A549 (cell line): ENCODE measurements at regions of chr1 and their contacts with region 1.

Region 1: DNA sequence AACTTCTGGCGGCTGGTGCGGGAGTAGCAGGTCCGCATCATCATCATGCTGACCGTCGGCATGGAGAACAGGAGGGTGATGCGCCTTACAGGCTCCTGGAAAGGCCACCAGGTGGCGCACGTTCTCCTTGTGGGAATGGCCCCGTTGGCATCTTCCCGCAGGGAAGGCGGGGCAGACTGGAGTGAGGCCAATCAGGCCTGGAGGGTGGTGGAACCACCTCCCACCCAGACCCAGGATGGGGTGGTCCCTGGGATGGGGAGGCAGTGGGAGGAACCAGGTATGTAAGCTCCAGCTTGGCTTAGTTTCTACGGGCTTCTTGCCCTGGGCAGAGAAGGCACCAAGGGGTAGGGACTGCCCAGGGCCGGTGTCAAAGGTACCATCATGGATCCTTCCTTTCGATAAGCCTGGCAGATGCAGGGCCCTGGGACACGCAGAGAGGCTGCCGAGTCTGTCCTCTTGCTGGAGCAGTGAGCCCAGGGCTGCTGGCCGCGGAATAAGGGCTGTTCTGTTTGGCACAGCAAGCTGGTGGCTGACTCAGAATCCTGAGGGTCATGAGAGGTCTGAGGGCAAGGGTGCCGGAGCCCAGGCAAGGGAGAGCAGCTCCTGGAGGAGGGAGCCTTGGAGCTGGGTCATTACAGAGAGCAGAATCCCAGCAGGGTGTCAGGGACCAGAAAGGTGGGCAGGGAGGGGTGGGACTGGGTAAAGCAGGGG is 8.7 kb upstream of the LGR6 start:
- DNase-seq: peak; percentile 91 to 92
- ATAC-seq: peak; percentile 74 to 91
- H3K4me3 ChIP-seq: no peak overlapping the region
- H3K27ac ChIP-seq: peak overlapping the region in 1 of 2 experiments; percentile 42; a peak in 1 of 6 replicates
- H3K4me1 ChIP-seq: peaks cover 11% of the 10 kb centered on the region
- CTCF ChIP-seq: peak; percentile 91
- EP300 ChIP-seq: no peak
- POLR2A ChIP-seq: no peak
- RAD21 ChIP-seq: peak; percentile 78 to 84

Region 2: GRCh38 chr1:202200112-202200566 is 15.2 kb after region 1 on chr1:
- CTCF ChIA-PET with region 1: interaction called, 39 read pairs
- POLR2A ChIA-PET with region 1: no interaction called
- DNase-seq: peak; percentile 53 to 66
- ATAC-seq: peak; percentile 26 to 66; a peak in 4 of 6 replicates
- H3K4me3 ChIP-seq: no peak overlapping the region
- H3K27ac ChIP-seq: peak overlapping the region; percentile 74 to 80
- H3K4me1 ChIP-seq: peaks cover 26% of the 10 kb centered on the region
- CTCF ChIP-seq: no peak
- EP300 ChIP-seq: no peak
- POLR2A ChIP-seq: no peak
- RAD21 ChIP-seq: no peak

Region 3: DNA sequence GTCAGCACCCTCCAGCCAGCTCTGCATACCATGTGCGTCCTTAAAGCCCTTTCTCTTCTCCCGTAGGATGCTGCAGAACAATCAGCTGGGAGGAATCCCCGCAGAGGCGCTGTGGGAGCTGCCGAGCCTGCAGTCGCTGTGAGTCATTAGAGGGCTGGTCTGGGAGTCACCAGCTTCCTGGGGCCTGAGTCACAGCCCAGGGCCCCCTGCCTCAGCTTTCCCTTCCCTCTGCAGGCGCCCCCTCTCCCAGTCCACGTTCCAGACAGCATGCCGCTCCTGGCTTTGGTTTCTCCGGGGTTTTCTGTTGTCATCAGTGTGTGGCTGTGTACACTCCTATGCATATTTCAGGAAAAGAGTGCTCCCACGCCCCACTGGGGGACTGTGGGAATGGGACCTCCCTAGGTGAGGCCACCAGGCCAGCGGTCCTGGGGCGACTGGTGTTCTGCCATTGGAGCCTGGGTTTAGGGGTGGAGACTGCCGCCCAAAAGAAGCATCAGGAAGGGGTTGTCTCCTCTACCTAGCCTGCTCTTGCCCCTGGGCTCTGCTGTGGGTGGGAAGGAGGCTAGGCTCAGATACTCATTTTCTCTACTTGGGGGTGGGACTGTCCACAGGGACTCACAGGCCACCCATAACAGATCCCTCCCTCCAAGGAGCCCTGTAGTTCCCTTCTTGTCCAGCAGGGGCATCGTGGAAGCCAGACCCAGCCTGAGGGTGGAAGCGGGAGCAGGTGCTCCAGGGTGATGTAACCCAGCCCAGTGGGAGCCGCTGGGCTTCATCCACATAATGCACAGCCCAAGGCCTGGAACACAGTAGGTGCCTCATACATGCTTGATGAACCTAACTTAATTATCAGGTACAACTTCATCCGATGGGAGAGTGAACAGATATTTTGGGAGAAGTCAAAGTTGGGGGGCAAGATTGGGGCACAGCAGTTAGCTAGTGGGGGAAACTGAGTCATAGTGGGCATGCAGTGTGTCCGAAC is 51.2 kb after region 1 on chr1:
- CTCF ChIA-PET with region 1: interaction called, 32 read pairs
- POLR2A ChIA-PET with region 1: no interaction called
- DNase-seq: peak; percentile 92 to 98
- ATAC-seq: peak; percentile 89 to 92
- H3K4me3 ChIP-seq: peak overlapping the region; percentile 26
- H3K27ac ChIP-seq: peak overlapping the region; percentile 77 to 88
- H3K4me1 ChIP-seq: peaks cover 29% of the 10 kb centered on the region
- CTCF ChIP-seq: peak; percentile 68
- EP300 ChIP-seq: no peak
- POLR2A ChIP-seq: no peak
- RAD21 ChIP-seq: peak; percentile 21 to 47; a peak in 3 of 5 replicates

Region 4: GRCh38 chr1:202283379-202283844 is 98.5 kb after region 1 on chr1:
- CTCF ChIA-PET with region 1: interaction called, 19 read pairs
- POLR2A ChIA-PET with region 1: no interaction called
- DNase-seq: peak; percentile 28 to 33
- ATAC-seq: peak; percentile 52 to 62
- H3K4me3 ChIP-seq: no peak overlapping the region; the same call in 2 of the 3 replicates
- H3K27ac ChIP-seq: peak overlapping the region; percentile 74 to 82
- H3K4me1 ChIP-seq: peaks cover 58% of the 10 kb centered on the region
- CTCF ChIP-seq: no peak
- EP300 ChIP-seq: peak in 1 of 2 experiments; percentile 57; a peak in 1 of 5 replicates
- POLR2A ChIP-seq: no peak
- RAD21 ChIP-seq: no peak

Region 5: GRCh38 chr1:202310071-202310722 is 125.3 kb after region 1 on chr1:
- CTCF ChIA-PET with region 1: interaction called, 350 read pairs
- POLR2A ChIA-PET with region 1: interaction called, 4 read pairs
- DNase-seq: no peak
- ATAC-seq: no peak
- H3K4me3 ChIP-seq: no peak overlapping the region
- H3K27ac ChIP-seq: no peak overlapping the region
- H3K4me1 ChIP-seq: peaks cover 5% of the 10 kb centered on the region; the same call in 1 of the 3 replicates
- CTCF ChIP-seq: no peak
- EP300 ChIP-seq: no peak
- POLR2A ChIP-seq: no peak
- RAD21 ChIP-seq: no peak

Region 6: GRCh38 chr1:202376247-202376646 is 191.3 kb after region 1 on chr1:
- CTCF ChIA-PET with region 1: no interaction called
- POLR2A ChIA-PET with region 1: no interaction called
- DNase-seq: peak in 1 of 2 experiments; percentile 22
- ATAC-seq: no peak
- H3K4me3 ChIP-seq: no peak overlapping the region
- H3K27ac ChIP-seq: peak overlapping the region; percentile 62 to 75; a peak in 5 of 6 replicates
- H3K4me1 ChIP-seq: peaks cover 58% of the 10 kb centered on the region
- CTCF ChIP-seq: no peak
- EP300 ChIP-seq: no peak
- POLR2A ChIP-seq: no peak
- RAD21 ChIP-seq: no peak

Region 7: GRCh38 chr1:202716654-202717053 is 531.7 kb after region 1 on chr1:
- CTCF ChIA-PET with region 1: interaction called, 27 read pairs
- POLR2A ChIA-PET with region 1: no interaction called
- DNase-seq: no peak
- ATAC-seq: no peak
- H3K4me3 ChIP-seq: no peak overlapping the region
- H3K27ac ChIP-seq: no peak overlapping the region
- H3K4me1 ChIP-seq: peaks cover 17% of the 10 kb centered on the region
- CTCF ChIP-seq: no peak
- EP300 ChIP-seq: no peak
- POLR2A ChIP-seq: no peak
- RAD21 ChIP-seq: no peak